ENCODE measurements at regions of chr4 and their contacts with region 1.

Region 1: GRCh38 chr4:151117371-151117962 is 18.0 kb downstream of the RPS3A start:
- DNase-seq: peak; percentile 80
- H3K4me3 ChIP-seq: no peak overlapping the region
- H3K27ac ChIP-seq: no peak overlapping the region
- H3K4me1 ChIP-seq: no peaks in the 10 kb centered on the region
- H3K27me3 ChIP-seq: no peaks in the 10 kb centered on the region

Region 2: DNA sequence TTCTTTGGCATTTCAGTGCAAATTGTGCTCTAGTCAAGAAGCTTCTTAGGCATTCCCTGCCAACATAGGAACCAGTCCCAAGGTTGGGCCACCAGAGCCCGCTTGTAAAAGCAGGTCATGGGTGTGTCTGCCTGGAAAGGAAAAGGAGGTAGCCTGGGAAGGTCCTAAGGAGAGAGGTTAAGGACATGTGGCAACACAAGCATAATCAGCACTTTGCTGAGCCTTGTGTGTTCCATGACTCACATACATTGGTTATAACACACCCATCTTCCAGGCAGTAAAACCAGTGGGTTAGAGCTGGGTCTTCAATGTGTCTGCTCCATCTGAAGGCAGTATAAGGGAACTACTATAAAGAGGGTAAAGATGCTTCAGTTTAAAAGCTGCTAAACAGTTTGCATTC is 456.5 kb after region 1 on chr4:
- in situ Hi-C with region 1: no loop called
- DNase-seq: peak; percentile 28
- H3K4me3 ChIP-seq: no peak overlapping the region
- H3K27ac ChIP-seq: no peak overlapping the region
- H3K4me1 ChIP-seq: no peaks in the 10 kb centered on the region
- H3K27me3 ChIP-seq: no peaks in the 10 kb centered on the region

Region 3: GRCh38 chr4:151604238-151604637 is 486.8 kb after region 1 on chr4:
- in situ Hi-C with region 1: loop called (anchors 10 kb)
- DNase-seq: peak; percentile 57
- H3K4me3 ChIP-seq: no peak overlapping the region
- H3K27ac ChIP-seq: no peak overlapping the region
- H3K4me1 ChIP-seq: 0 out of 2 replicates have a peak, but pooled peaks cover 5% of the 10 kb centered on the region
- H3K27me3 ChIP-seq: no peaks in the 10 kb centered on the region

Region 4: DNA sequence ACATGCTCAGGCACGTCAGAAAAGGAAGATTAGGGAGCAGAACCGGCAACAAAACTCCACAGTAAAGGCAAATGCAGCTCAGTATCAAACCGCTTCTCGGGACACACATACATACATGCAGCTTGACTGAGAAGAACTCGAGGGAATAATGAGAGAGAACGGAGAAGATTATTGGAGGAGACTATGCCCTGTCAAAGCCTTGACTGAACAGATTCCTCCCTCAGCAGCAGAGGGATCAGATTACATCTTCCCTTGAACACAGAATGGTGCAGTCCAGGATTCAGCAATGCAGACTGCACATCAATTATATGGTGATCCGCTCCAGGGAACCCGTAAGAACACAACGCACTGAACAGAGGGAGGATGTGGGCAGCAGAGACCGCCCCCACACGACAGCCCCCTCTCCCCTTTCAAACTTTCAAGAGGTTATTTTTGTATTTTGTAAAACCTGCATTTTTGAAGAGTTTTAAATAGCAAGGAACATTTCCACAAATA is 1235.2 kb after region 1 on chr4:
- in situ Hi-C with region 1: loop called (anchors 25 kb)
- DNase-seq: peak; percentile 96
- H3K4me3 ChIP-seq: peak overlapping the region; percentile 93
- H3K27ac ChIP-seq: peak overlapping the region; percentile 88
- H3K4me1 ChIP-seq: peaks cover 69% of the 10 kb centered on the region
- H3K27me3 ChIP-seq: no peaks in the 10 kb centered on the region

Measured in GM23248 (cell line).